Activated B cell treated with CpG ODN at 0.5 μM for 24 hours (primary cell): ENCODE measurements at regions of chr14 and their contacts with region 1.

Region 1: GRCh38 chr14:105203057-105203531 is 22.0 kb upstream of the NUDT14 start:
- DNase-seq: peak; percentile 69
- ATAC-seq: peak; percentile 54
- H3K4me3 Mint-ChIP-seq: no peak overlapping the region
- H3K27ac Mint-ChIP-seq: no peak overlapping the region
- H3K4me1 Mint-ChIP-seq: peaks cover 15% of the 10 kb centered on the region
- H3K27me3 Mint-ChIP-seq: peaks cover 23% of the 10 kb centered on the region
- CTCF ChIP-seq: peak; percentile 76

Region 2: DNA sequence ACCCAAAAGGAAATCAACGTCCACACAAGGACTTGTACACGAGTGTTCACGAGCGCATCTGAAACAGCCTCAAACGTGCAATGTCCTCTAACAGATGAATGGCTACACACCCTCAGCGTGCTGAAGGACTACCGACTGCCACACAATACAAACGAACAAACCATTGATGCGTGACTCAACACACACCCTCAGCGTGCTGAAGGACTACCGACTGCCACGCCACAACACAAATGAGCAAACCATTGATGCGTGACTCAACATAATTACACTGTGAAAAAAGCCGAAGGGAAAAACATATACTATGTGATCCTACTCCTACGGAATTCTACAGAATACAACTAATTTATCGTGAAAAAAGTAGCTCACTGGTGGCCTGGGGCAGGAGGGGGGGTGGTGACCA is 20.2 kb after region 1 on chr14:
- CTCF ChIA-PET with region 1: no interaction called
- POLR2A ChIA-PET with region 1: no interaction called
- intact Hi-C with region 1: no loop called
- DNase-seq: no peak
- ATAC-seq: no peak
- H3K4me3 Mint-ChIP-seq: no peak overlapping the region
- H3K27ac Mint-ChIP-seq: no peak overlapping the region
- H3K4me1 Mint-ChIP-seq: no peaks in the 10 kb centered on the region
- H3K27me3 Mint-ChIP-seq: no peaks in the 10 kb centered on the region
- CTCF ChIP-seq: no peak

Region 3: GRCh38 chr14:105248368-105248756 is 45.3 kb after region 1 on chr14 and contains the start of gene BTBD6:
- CTCF ChIA-PET with region 1: no interaction called
- POLR2A ChIA-PET with region 1: no interaction called
- intact Hi-C with region 1: loop called (anchors 1 kb)
- DNase-seq: peak; percentile 88
- ATAC-seq: peak; percentile 95
- H3K4me3 Mint-ChIP-seq: peak within 1 kb of the TSS; percentile 82
- H3K27ac Mint-ChIP-seq: peak within 1 kb of the TSS; percentile 56
- H3K4me1 Mint-ChIP-seq: peaks cover 40% of the 10 kb centered on the region
- H3K27me3 Mint-ChIP-seq: no peaks in the 10 kb centered on the region
- CTCF ChIP-seq: no peak
- total RNA-seq, gene BTBD6: 17.5 and 21.0 TPM in 2 replicates

Region 4: DNA sequence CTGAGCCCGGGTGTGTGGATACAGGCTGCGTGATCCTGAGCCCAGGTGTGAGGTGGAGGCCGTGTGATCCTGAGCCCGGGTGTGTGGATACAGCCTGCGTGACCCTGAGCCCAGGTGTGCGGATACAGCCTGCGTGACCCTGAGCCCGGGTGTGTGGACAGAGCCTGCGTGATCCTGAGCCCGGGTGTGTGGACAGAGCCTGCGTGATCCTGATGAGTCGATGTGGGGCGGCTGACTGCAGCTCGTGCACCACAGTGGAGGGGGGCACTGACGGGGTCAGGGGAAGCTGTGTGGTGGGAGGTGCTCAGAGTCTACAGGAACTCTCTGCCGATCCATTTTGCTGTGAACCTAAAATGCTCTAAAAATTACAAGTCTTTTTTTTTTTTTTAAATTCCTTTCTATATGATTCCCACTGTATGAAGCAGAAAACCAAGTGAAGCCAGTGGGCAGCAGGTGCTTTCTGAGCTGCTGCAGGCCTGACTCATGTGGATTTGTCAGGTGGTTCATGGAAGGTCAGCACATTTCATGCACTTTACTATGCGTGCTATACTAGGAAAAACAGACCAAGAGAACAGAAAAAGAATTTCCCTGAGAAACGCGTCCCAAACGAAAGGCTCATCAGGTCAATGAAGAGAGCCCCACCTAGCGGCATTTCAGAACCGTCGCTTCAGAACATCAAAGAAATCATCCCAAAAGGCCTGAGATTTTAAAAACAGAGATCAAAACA is 78.4 kb after region 1 on chr14:
- CTCF ChIA-PET with region 1: no interaction called
- POLR2A ChIA-PET with region 1: no interaction called
- intact Hi-C with region 1: loop called (anchors 5 kb)
- DNase-seq: no peak
- ATAC-seq: no peak
- H3K4me3 Mint-ChIP-seq: no peak overlapping the region
- H3K27ac Mint-ChIP-seq: no peak overlapping the region
- H3K4me1 Mint-ChIP-seq: peaks cover 14% of the 10 kb centered on the region
- H3K27me3 Mint-ChIP-seq: no peaks in the 10 kb centered on the region
- CTCF ChIP-seq: no peak

Region 5: DNA sequence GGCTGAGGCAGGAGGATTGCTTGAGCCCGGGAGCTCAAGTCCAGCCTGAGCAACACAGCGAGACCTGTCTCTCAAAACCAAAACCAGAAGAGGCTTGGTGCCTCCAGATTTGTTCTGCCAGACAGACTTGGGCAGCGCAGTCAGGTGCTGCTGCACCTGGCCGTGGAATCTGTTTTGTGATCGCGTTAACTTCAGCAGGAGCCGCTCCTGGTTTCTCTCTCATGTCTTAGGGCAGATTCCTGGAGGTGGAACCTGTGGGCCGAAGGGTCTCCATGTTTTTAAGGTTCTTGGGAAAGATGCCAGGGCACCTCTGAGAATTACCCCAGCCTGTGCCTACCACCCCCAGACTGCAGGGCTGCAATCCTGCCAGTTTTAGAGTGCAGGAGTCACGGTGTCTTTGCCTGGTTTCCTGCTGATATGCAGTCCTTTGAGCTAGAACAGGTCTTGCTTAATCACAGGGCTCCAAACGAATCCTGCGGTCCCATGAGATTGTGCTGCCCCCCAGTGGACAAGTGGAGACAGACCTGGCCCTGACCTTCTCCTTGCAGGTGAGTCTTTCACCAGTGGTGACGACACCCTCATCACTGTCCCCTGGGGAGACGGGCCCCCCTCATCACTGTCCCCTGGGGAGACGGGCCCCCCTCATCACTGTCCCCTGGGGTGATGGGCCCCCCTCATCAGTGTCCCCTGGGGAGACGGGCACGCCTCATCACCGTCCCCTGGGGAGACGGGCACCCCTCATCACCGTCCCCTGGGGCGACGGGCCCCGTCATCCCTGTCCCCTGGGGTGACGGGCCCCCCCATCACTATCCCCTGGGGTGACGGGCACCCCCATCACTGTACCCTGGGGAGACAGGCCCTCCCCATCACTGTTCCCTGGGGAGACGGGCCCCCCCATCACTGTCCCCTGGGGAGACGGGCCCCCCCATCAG is 149.1 kb after region 1 on chr14:
- CTCF ChIA-PET with region 1: interaction called, 5 read pairs
- POLR2A ChIA-PET with region 1: no interaction called
- intact Hi-C with region 1: loop called (anchors 1 kb)
- DNase-seq: peak; percentile 73
- ATAC-seq: peak; percentile 90
- H3K4me3 Mint-ChIP-seq: no peak overlapping the region
- H3K27ac Mint-ChIP-seq: peak overlapping the region; percentile 53
- H3K4me1 Mint-ChIP-seq: peaks cover 7% of the 10 kb centered on the region
- H3K27me3 Mint-ChIP-seq: no peaks in the 10 kb centered on the region
- CTCF ChIP-seq: no peak

Region 6: GRCh38 chr14:105527661-105528581 is 324.8 kb after region 1 on chr14:
- CTCF ChIA-PET with region 1: interaction called, 3 read pairs
- POLR2A ChIA-PET with region 1: no interaction called
- intact Hi-C with region 1: loop called (anchors 1 kb)
- DNase-seq: peak; percentile 82
- ATAC-seq: peak; percentile 47
- H3K4me3 Mint-ChIP-seq: peak overlapping the region; percentile 68
- H3K27ac Mint-ChIP-seq: no peak overlapping the region
- H3K4me1 Mint-ChIP-seq: peaks cover 44% of the 10 kb centered on the region
- H3K27me3 Mint-ChIP-seq: peaks cover 4% of the 10 kb centered on the region
- CTCF ChIP-seq: no peak